ENCODE measurements at regions of chr7 and their contacts with region 1.

Region 1: GRCh38 chr7:2384354-2385243 is 18.8 kb upstream of the CHST12 start:
- DNase-seq: no peak
- ATAC-seq: peak; percentile 28
- H3K4me3 ChIP-seq: no peak overlapping the region
- H3K27ac ChIP-seq: no peak overlapping the region
- H3K4me1 ChIP-seq: 0 out of 2 replicates have a peak, but pooled peaks cover 8% of the 10 kb centered on the region
- H3K27me3 ChIP-seq: no peaks in the 10 kb centered on the region
- CTCF ChIP-seq: peak; percentile 53
- EP300 ChIP-seq: no peak
- POLR2A ChIP-seq: no peak
- RAD21 ChIP-seq: no peak

Region 2: DNA sequence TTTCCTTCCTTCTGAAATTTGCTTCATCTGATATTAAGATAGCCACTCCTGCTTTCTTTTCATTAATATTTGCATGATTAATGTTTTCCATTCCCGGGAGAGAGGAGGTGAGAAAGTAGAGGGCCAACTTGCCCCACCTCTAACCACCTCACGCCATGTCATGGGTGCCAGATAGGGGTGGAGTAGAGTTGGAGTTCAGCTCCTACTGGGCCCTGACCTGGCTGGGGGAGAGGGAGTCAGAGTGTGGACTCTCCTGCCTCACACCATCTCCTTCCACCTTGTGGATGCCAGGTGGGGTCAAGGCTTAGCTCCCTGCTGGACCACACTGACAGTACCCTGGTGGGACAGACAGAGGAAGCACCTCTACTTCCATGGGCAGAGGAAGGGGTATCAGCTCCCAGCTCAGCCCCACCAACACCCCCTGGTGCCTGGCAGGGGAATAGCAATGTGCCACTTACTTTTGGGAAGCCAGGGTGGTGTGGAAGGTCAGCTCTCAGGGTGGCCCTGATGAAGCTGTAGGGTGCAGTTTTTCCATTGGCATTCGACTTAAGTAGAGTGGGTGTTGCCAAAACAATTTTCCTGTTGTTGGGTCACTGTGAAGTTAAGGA is 46.8 kb after region 1 on chr7:
- CTCF ChIA-PET with region 1: no interaction called
- POLR2A ChIA-PET with region 1: no interaction called
- in situ Hi-C with region 1: loop called (anchors 10 kb)
- intact Hi-C with region 1: loop called (anchors 1 kb)
- DNase-seq: peak; percentile 45
- ATAC-seq: peak; percentile 92
- H3K4me3 ChIP-seq: no peak overlapping the region
- H3K27ac ChIP-seq: no peak overlapping the region
- H3K4me1 ChIP-seq: peaks cover 16% of the 10 kb centered on the region
- H3K27me3 ChIP-seq: no peaks in the 10 kb centered on the region
- CTCF ChIP-seq: peak; percentile 88
- EP300 ChIP-seq: no peak
- POLR2A ChIP-seq: no peak
- RAD21 ChIP-seq: peak; percentile 76

Measured in HepG2 (cell line).